CD8-positive, alpha-beta T cell (primary cell): ENCODE measurements at regions of chr19 and their contacts with region 1.

Region 1: GRCh38 chr19:57435062-57435978 is at the start of gene ZNF749:
- DNase-seq: peak; percentile 93 to 100 (median 96)
- ATAC-seq: peak; percentile 99
- H3K4me3 ChIP-seq: peak within 1 kb of the TSS; percentile 57 to 86
- H3K4me3 Mint-ChIP-seq: peak within 1 kb of the TSS; percentile 99
- H3K27ac ChIP-seq: peak within 1 kb of the TSS; percentile 52 to 80
- H3K27ac Mint-ChIP-seq: peak within 1 kb of the TSS; percentile 97
- H3K4me1 ChIP-seq: peaks cover 11% of the 10 kb centered on the region
- H3K4me1 Mint-ChIP-seq: peaks cover 34% of the 10 kb centered on the region
- H3K27me3 ChIP-seq: no peaks in the 10 kb centered on the region
- H3K27me3 Mint-ChIP-seq: no peaks in the 10 kb centered on the region
- CTCF ChIP-seq: no peak
- total RNA-seq, gene ZNF749: 5.6 to 9.1 TPM

Region 2: DNA sequence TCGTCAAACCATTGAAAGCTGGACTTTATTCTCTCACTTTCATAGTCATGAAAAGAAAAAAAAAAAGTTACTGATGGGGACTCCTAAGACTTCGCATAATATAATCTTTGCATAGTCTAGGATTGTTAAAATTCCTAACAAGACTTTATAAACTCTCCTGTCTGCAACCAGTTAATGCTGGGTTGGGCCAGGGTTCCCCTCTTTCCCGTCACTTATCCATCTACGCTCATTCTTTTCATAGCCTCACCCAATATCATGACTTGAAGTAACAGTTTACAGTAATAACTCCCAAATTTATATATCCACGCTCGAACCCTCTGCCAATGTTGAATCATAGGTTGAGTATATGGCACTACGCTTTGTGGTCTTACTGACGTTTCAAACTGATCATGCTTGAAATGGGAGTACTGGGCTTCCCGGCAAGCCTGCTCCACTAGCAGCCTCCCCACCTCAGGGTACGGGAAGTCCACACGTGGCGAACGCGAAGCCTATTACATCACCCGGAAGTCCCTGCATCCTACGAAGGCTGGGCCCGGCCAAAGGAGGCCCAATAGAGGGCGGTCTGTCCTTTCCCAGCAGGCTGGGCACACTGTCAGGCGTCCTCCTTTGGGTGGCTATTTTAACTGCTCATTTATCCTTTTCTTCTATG is 155.8 kb before region 1 on chr19:
- CTCF ChIA-PET with region 1: no interaction called
- POLR2A ChIA-PET with region 1: no interaction called
- intact Hi-C with region 1: loop called in 1 of 2 experiments (anchors 1 kb)
- DNase-seq: peak; percentile 55 to 94 (median 75)
- ATAC-seq: peak; percentile 64
- H3K4me3 ChIP-seq: peak overlapping the region; percentile 54 to 99
- H3K4me3 Mint-ChIP-seq: no peak overlapping the region
- H3K27ac ChIP-seq: peak overlapping the region; percentile 86 to 93
- H3K27ac Mint-ChIP-seq: no peak overlapping the region
- H3K4me1 ChIP-seq: peaks cover 28% of the 10 kb centered on the region
- H3K4me1 Mint-ChIP-seq: peaks cover 33% of the 10 kb centered on the region
- H3K27me3 ChIP-seq: no peaks in the 10 kb centered on the region
- H3K27me3 Mint-ChIP-seq: no peaks in the 10 kb centered on the region
- CTCF ChIP-seq: no peak

Region 3: GRCh38 chr19:57362997-57363705 is 72.2 kb before region 1 on chr19 and contains the starts of genes TRAPPC2B and ZNF547:
- CTCF ChIA-PET with region 1: no interaction called
- POLR2A ChIA-PET with region 1: no interaction called
- intact Hi-C with region 1: loop called (anchors 1 to 2 kb)
- DNase-seq: peak; percentile 96 to 99 (median 99)
- ATAC-seq: peak; percentile 89
- H3K4me3 ChIP-seq: peak within 1 kb of the TSS; percentile 63 to 66
- H3K4me3 Mint-ChIP-seq: peak within 1 kb of the TSS; percentile 86
- H3K27ac ChIP-seq: peak within 1 kb of the TSS; percentile 81 to 95
- H3K27ac Mint-ChIP-seq: peak within 1 kb of the TSS; percentile 98
- H3K4me1 ChIP-seq: peaks cover 12% of the 10 kb centered on the region
- H3K4me1 Mint-ChIP-seq: peaks cover 18% of the 10 kb centered on the region
- H3K27me3 ChIP-seq: no peaks in the 10 kb centered on the region
- H3K27me3 Mint-ChIP-seq: no peaks in the 10 kb centered on the region
- CTCF ChIP-seq: no peak
- total RNA-seq, gene TRAPPC2B: 8.6 to 9.9 TPM
- total RNA-seq, gene ZNF547: 0.72 to 0.81 TPM

Region 4: DNA sequence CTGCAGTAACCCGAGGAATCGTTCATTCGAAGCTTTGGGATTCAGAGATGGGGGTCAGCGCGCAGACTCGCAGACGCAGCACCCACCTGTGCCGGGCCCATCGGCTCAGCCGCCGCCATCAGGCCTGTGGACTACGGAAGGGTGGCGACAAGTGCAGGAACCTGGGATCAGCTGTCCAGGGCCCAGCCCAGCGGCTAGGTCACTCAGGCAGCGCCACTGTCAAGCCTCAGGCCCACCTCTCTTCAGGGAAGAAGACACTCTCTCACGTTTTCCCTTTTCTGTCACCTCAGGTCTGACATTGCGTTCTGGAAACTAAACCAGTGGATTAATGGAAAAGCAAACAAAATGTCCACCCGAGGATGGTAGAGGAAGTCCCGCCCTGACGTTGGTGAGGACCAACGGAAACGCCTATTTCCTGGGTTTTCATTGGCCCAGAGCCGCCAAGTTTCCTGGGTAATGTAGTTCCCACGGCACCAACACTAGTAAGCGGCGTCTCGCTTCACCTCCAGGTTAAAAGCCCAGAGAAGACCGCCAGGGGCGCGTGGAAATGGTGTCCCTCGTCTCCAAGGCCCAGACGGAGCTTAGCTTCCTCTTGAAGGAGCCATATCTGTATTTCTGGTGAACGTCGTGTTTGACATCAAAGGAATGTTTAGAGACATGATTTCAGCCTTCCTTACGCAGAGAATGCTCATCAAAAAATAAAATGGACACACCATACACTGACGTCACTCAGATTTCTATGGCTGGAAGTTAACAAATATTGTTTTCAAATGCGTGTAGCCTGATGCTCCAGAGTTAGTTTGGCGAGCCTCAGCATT is 42.1 kb after region 1 on chr19 and contains the start of gene ZNF772:
- CTCF ChIA-PET with region 1: no interaction called
- POLR2A ChIA-PET with region 1: no interaction called
- intact Hi-C with region 1: loop called (anchors 1 to 2 kb)
- DNase-seq: peak; percentile 76 to 95 (median 88)
- ATAC-seq: peak; percentile 99
- H3K4me3 ChIP-seq: peak within 1 kb of the TSS; percentile 78 to 86
- H3K4me3 Mint-ChIP-seq: peak within 1 kb of the TSS; percentile 88
- H3K27ac ChIP-seq: peak within 1 kb of the TSS; percentile 47 to 83
- H3K27ac Mint-ChIP-seq: peak within 1 kb of the TSS; percentile 92
- H3K4me1 ChIP-seq: peaks cover 8% of the 10 kb centered on the region
- H3K4me1 Mint-ChIP-seq: peaks cover 14% of the 10 kb centered on the region
- H3K27me3 ChIP-seq: peaks cover 0 to 2% of the 10 kb centered on the region in 2 experiments
- H3K27me3 Mint-ChIP-seq: peaks cover 2% of the 10 kb centered on the region
- CTCF ChIP-seq: peak; percentile 65
- total RNA-seq, gene ZNF772: 0.41 to 0.97 TPM

Region 5: DNA sequence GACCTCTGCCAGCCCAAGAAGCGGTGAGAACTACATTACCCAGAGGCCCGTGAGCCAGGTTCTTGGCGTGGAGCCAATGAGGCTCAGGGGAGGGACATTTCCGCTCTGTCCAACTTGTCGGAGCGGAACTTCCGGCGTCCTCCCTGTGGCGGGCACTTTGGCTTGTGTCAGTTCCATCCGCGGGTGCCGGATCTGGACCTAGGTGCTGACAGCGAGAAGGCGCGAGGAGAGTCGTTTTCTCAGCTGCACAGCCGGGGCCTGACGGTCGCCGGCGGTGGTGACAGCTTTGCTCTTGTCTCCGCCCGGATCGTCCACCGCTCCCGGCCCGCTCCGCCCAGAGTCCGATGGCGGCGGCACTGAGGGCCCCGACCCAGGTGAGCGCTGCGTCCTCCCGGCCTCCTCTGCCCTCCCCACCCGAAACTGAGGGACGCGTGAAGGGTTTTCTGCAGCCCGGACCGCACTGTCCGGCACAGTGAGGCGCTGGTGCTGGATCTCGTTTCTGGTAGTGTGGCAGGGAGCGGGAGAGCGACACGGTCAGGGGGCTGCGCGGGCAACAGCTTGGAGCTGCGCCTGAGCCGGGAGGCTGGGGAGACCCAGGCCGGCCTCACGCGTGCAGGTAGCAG is 164.6 kb after region 1 on chr19 and contains the start of gene ZNF530:
- CTCF ChIA-PET with region 1: no interaction called
- POLR2A ChIA-PET with region 1: no interaction called
- intact Hi-C with region 1: loop called in 1 of 2 experiments (anchors 1 kb)
- DNase-seq: peak; percentile 61 to 93 (median 88)
- ATAC-seq: peak; percentile 86
- H3K4me3 ChIP-seq: peak within 1 kb of the TSS; percentile 67 to 81
- H3K4me3 Mint-ChIP-seq: peak within 1 kb of the TSS; percentile 88
- H3K27ac ChIP-seq: peak within 1 kb of the TSS; percentile 16 to 51
- H3K27ac Mint-ChIP-seq: peak within 1 kb of the TSS; percentile 33
- H3K4me1 ChIP-seq: peaks cover 13% of the 10 kb centered on the region
- H3K4me1 Mint-ChIP-seq: peaks cover 25% of the 10 kb centered on the region
- H3K27me3 ChIP-seq: no peaks in the 10 kb centered on the region
- H3K27me3 Mint-ChIP-seq: no peaks in the 10 kb centered on the region
- CTCF ChIP-seq: no peak
- total RNA-seq, gene ZNF530: 3.6 to 4.2 TPM

Region 6: GRCh38 chr19:57746580-57747471 is 311.5 kb after region 1 on chr19 and contains the start of gene ZNF776:
- CTCF ChIA-PET with region 1: no interaction called
- POLR2A ChIA-PET with region 1: no interaction called
- intact Hi-C with region 1: loop called (anchors 1 to 10 kb)
- DNase-seq: peak; percentile 63 to 93 (median 84)
- ATAC-seq: peak; percentile 96
- H3K4me3 ChIP-seq: peak within 1 kb of the TSS; percentile 75 to 84
- H3K4me3 Mint-ChIP-seq: peak within 1 kb of the TSS; percentile 95
- H3K27ac ChIP-seq: peak within 1 kb of the TSS; percentile 71 to 80
- H3K27ac Mint-ChIP-seq: peak within 1 kb of the TSS; percentile 98
- H3K4me1 ChIP-seq: peaks cover 16% of the 10 kb centered on the region
- H3K4me1 Mint-ChIP-seq: peaks cover 41% of the 10 kb centered on the region
- H3K27me3 ChIP-seq: no peaks in the 10 kb centered on the region
- H3K27me3 Mint-ChIP-seq: no peaks in the 10 kb centered on the region
- CTCF ChIP-seq: no peak
- total RNA-seq, gene ZNF776: 22.3 to 32.3 TPM

Region 7: DNA sequence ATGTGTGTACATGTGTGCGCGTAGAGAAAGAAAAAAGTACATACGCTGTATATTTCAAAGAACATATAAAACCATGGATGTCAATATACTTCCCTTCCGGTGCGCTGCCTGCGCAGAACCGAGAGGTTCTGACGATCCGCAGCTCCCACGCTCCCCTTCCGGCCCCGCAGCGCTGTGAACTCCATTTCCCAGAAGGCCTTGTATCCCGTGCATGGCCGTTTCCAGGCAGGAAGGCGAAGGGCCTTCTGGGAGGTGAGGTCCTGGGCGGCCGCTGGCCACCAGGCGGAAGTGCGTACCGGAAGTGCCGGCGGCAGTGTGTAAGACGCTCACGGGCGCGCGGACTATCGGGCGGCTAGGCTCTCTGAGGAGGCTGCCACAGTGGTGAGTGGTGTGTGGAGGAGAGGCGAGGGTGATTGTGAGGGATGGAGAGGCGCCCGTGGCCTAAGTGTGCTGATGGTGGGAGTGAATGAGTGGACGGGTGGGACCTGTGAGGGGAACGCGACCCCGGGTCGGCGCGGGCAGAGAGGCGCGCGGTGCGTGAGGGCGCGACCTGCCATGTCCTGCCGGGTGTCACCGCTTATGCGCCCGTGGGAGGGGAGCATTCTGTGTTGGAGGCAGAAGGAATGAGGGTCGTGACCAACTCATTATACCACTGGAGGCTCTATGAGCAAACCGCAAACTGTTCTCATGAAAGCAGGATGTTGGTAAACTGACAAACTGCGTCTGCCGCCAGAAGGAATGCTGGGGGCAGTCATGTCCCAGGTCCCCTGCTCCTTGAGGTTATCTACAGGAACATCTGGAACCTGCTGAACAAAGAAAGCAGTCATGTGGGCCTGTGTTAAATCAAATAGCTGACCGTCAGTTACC is 870.0 kb after region 1 on chr19 and contains the start of gene ERVK3-1:
- CTCF ChIA-PET with region 1: no interaction called
- POLR2A ChIA-PET with region 1: no interaction called
- intact Hi-C with region 1: loop called in 1 of 2 experiments (anchors 10 kb)
- DNase-seq: peak; percentile 89 to 99 (median 93)
- ATAC-seq: peak; percentile 96
- H3K4me3 ChIP-seq: peak within 1 kb of the TSS; percentile 82 to 89
- H3K4me3 Mint-ChIP-seq: peak within 1 kb of the TSS; percentile 98
- H3K27ac ChIP-seq: peak within 1 kb of the TSS; percentile 93 to 95
- H3K27ac Mint-ChIP-seq: peak within 1 kb of the TSS; percentile 99
- H3K4me1 ChIP-seq: peaks cover 27% of the 10 kb centered on the region
- H3K4me1 Mint-ChIP-seq: peaks cover 53% of the 10 kb centered on the region
- H3K27me3 ChIP-seq: no peaks in the 10 kb centered on the region
- H3K27me3 Mint-ChIP-seq: no peaks in the 10 kb centered on the region
- CTCF ChIP-seq: no peak
- total RNA-seq, gene ERVK3-1: 174 to 182 TPM